Activated CD4-positive, alpha-beta T cell treated with anti-CD3 and anti-CD28 coated beads for 36 hours (primary cell): ENCODE measurements at regions of chr14 and their contacts with region 1.

Region 1: GRCh38 chr14:39383026-39383660 is 49.1 kb downstream of the FBXO33 start:
- DNase-seq: no peak
- ATAC-seq: peak; percentile 97
- H3K4me3 Mint-ChIP-seq: no peak overlapping the region
- H3K27ac Mint-ChIP-seq: no peak overlapping the region
- H3K4me1 Mint-ChIP-seq: peaks cover 31% of the 10 kb centered on the region
- H3K27me3 Mint-ChIP-seq: no peaks in the 10 kb centered on the region

Region 2: DNA sequence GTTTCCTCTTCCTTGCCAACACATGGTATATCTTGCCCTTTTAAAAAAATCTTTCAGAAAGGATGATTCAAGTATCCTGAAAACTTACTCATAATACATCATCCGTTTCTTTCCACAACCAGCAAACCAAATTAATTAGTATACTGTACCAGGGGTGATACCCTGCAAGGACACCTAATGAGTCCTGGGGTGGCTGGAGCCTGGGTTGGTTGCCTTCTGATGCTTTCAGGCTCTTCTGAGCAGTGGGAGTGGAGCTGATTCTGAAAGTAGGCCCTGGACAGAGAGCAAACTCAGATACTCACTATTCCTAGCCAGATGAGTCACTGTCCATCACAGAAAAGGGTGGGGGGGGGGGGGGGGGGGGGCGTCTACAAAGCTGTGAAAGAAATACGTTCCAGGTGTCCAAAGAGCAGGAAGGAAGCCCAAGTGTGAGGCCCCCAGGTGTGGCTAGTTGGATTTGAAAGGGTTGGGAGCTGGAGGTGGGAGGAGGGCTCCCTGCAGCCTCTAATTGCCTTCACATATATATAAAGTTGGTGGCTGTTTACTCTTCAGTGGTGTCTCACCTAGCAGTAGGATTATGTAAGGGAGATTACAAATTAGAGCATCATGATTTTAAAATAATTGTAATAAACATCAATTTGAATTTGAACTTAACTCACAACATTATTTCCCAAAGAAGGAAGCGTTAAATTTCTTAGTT is 12.6 kb after region 1 on chr14:
- CTCF ChIA-PET with region 1: interaction called, 10 read pairs
- POLR2A ChIA-PET with region 1: no interaction called
- intact Hi-C with region 1: no loop called
- DNase-seq: peak; percentile 20
- ATAC-seq: peak; percentile 85
- H3K4me3 Mint-ChIP-seq: no peak overlapping the region
- H3K27ac Mint-ChIP-seq: peak overlapping the region; percentile 84
- H3K4me1 Mint-ChIP-seq: peaks cover 13% of the 10 kb centered on the region
- H3K27me3 Mint-ChIP-seq: no peaks in the 10 kb centered on the region